ENCODE measurements at regions of chr12 and their contacts with region 1.

Region 1: GRCh38 chr12:96120359-96121100 is 73.6 kb upstream of the ELK3 start:
- H3K4me3 Mint-ChIP-seq: peak overlapping the region; percentile 20
- H3K27ac Mint-ChIP-seq: peak overlapping the region; percentile 66
- H3K4me1 Mint-ChIP-seq: peaks cover 22% of the 10 kb centered on the region
- H3K27me3 Mint-ChIP-seq: peaks cover 29% of the 10 kb centered on the region

Region 2: GRCh38 chr12:95458771-95459170 is 661.8 kb before region 1 on chr12:
- intact Hi-C with region 1: no loop called
- H3K4me3 Mint-ChIP-seq: no peak overlapping the region
- H3K27ac Mint-ChIP-seq: no peak overlapping the region
- H3K4me1 Mint-ChIP-seq: no peaks in the 10 kb centered on the region
- H3K27me3 Mint-ChIP-seq: peaks cover 4% of the 10 kb centered on the region

Region 3: GRCh38 chr12:96108321-96108720 is 12.2 kb before region 1 on chr12:
- intact Hi-C with region 1: loop called (anchors 1 kb)
- H3K4me3 Mint-ChIP-seq: peak overlapping the region; percentile 57
- H3K27ac Mint-ChIP-seq: peak overlapping the region; percentile 81
- H3K4me1 Mint-ChIP-seq: peaks cover 43% of the 10 kb centered on the region
- H3K27me3 Mint-ChIP-seq: peaks cover 11% of the 10 kb centered on the region

Region 4: GRCh38 chr12:96170328-96170727 is 49.8 kb after region 1 on chr12:
- intact Hi-C with region 1: loop called (anchors 5 kb)
- H3K4me3 Mint-ChIP-seq: no peak overlapping the region
- H3K27ac Mint-ChIP-seq: peak overlapping the region; percentile 21
- H3K4me1 Mint-ChIP-seq: peaks cover 37% of the 10 kb centered on the region
- H3K27me3 Mint-ChIP-seq: peaks cover 18% of the 10 kb centered on the region

Region 5: GRCh38 chr12:96219698-96220206 is 99.2 kb after region 1 on chr12:
- intact Hi-C with region 1: loop called (anchors 10 kb)
- H3K4me3 Mint-ChIP-seq: no peak overlapping the region
- H3K27ac Mint-ChIP-seq: peak overlapping the region; percentile 14
- H3K4me1 Mint-ChIP-seq: peaks cover 32% of the 10 kb centered on the region
- H3K27me3 Mint-ChIP-seq: no peaks in the 10 kb centered on the region

Measured in dendritic cell treated with granulocyte-macrophage colony-stimulating factor and Interleukin-4, amounts not matched to agents 40 ng/mL and 50 ng/mL, for 4 days (primary cell).